PC-9 (cell line): ENCODE measurements at regions of chr2 and their contacts with region 1.

Region 1: GRCh38 chr2:151851761-151852160 is 23.5 kb upstream of the ARL5A start:
- DNase-seq: peak; percentile 6 to 68
- H3K4me3 ChIP-seq: no peak overlapping the region
- H3K27ac ChIP-seq: no peak overlapping the region
- H3K4me1 ChIP-seq: no peaks in the 10 kb centered on the region
- H3K27me3 ChIP-seq: no peaks in the 10 kb centered on the region
- CTCF ChIP-seq: no peak

Region 2: DNA sequence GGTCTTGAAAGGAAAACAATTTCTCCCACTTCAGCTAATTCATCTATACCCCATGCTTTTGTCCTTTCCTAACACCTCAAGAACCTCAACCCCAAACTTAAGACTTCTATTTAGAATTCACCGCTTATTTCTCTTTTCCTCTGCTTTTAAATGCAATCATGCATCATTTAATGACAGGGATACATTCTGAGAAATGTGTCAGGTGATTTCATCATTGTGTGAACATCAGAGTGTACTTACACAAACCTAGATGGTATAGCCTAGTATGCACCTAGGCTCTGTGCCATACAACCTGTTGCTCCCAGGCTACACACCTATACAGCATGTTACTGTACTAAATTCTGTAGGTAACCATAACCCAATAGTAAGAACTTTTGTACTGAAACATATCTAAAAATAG is 46.4 kb before region 1 on chr2:
- CTCF ChIA-PET with region 1: interaction called, 10 read pairs
- POLR2A ChIA-PET with region 1: no interaction called
- intact Hi-C with region 1: no loop called
- DNase-seq: no peak
- H3K4me3 ChIP-seq: no peak overlapping the region
- H3K27ac ChIP-seq: no peak overlapping the region
- H3K4me1 ChIP-seq: no peaks in the 10 kb centered on the region
- H3K27me3 ChIP-seq: no peaks in the 10 kb centered on the region
- CTCF ChIP-seq: no peak

Region 3: DNA sequence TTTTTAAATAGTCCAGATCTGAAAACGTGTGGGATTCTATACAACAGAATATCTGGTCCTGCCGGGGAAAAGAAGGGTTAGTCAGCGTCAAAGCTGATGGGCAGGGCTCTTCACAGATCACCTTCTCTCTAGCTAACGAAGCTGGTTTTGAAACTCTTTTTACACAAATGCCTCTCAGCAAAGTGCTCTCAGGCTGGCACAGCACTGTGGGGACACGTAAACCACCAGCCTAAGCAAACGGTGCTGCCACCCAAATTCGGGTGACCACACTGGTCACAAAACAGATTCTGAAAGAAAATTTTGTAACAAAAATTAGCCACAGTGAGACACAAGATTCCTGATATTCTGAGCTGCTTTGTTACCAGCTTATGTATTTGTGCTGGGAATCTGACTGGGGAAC is 29.6 kb after region 1 on chr2:
- CTCF ChIA-PET with region 1: no interaction called
- POLR2A ChIA-PET with region 1: interaction called, 46 read pairs
- intact Hi-C with region 1: no loop called
- DNase-seq: no peak
- H3K4me3 ChIP-seq: no peak overlapping the region
- H3K27ac ChIP-seq: no peak overlapping the region
- H3K4me1 ChIP-seq: peaks cover 8% of the 10 kb centered on the region; the same call in 1 of the 2 replicates
- H3K27me3 ChIP-seq: no peaks in the 10 kb centered on the region
- CTCF ChIP-seq: no peak